Activated CD8-positive, alpha-beta T cell treated with anti-CD3 and anti-CD28 coated beads, Interleukin-2, amount 10 ng/mL, durations not matched to agents 7 days and 5 days (primary cell): ENCODE measurements at regions of chr1 and their contacts with region 1.

Region 1: GRCh38 chr1:228131766-228132165 is 8.3 kb upstream of the GUK1 start:
- DNase-seq: no peak
- ATAC-seq: no peak
- H3K4me3 Mint-ChIP-seq: no peak overlapping the region
- H3K27ac Mint-ChIP-seq: no peak overlapping the region
- H3K4me1 Mint-ChIP-seq: peaks cover 15% of the 10 kb centered on the region
- H3K27me3 Mint-ChIP-seq: peaks cover 24% of the 10 kb centered on the region

Region 2: GRCh38 chr1:227999056-227999930 is 132.5 kb before region 1 on chr1:
- CTCF ChIA-PET with region 1: interaction called, 13 read pairs
- POLR2A ChIA-PET with region 1: no interaction called
- DNase-seq: peak; percentile 80
- ATAC-seq: peak; percentile 95
- H3K4me3 Mint-ChIP-seq: no peak overlapping the region
- H3K27ac Mint-ChIP-seq: no peak overlapping the region
- H3K4me1 Mint-ChIP-seq: no peaks in the 10 kb centered on the region
- H3K27me3 Mint-ChIP-seq: peaks cover 25% of the 10 kb centered on the region

Region 3: GRCh38 chr1:228120857-228121489 is 10.8 kb before region 1 on chr1:
- CTCF ChIA-PET with region 1: interaction called, 25 read pairs
- POLR2A ChIA-PET with region 1: interaction called, 3 read pairs
- DNase-seq: no peak
- ATAC-seq: peak; percentile 36
- H3K4me3 Mint-ChIP-seq: peak overlapping the region; percentile 38
- H3K27ac Mint-ChIP-seq: peak overlapping the region; percentile 75
- H3K4me1 Mint-ChIP-seq: peaks cover 10% of the 10 kb centered on the region
- H3K27me3 Mint-ChIP-seq: peaks cover 7% of the 10 kb centered on the region